ENCODE measurements at regions of chr14 and their contacts with region 1.

Region 1: DNA sequence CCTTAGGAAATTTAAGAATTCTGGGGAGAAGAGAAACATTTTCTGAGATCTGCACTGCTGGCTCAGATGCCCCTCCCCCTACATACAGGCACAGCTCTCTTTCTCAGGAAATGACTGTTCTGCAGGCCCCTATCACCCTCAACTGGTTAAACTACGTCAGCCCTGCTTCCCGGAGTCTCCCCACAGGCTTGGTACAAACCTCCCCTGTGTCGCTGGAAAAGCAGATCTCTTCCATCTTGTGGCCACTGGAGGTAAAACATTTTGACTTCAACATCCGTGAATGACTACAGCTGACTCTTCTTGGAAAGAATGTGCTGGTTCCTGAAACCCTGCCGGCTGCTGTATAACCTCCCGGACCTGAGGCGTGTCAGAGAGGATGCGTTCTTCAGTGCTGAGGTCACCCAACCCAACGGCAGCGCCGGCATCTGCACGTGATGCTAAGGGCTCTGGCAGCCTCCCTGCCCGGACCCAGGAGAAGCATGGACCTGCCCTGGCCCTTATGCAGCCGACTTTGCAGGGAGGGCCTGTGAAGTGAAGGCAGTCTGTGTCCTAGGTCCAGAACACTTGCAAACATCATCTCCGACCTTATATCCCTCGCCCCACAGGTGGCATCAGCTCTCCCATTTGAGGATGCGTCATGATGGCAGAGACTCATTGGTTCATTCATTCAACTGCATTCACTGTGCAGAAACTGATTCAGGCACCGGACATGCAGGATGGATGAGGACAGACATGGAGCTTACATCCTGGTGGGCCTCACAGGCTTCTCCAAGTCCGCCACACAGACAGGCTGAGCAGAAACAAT is 129.3 kb downstream of the GCH1 start:
- DNase-seq: peak; percentile 93
- ATAC-seq: peak; percentile 83
- H3K4me3 Mint-ChIP-seq: peak overlapping the region; percentile 16
- H3K27ac Mint-ChIP-seq: peak overlapping the region; percentile 79
- H3K4me1 Mint-ChIP-seq: peaks cover 47% of the 10 kb centered on the region
- H3K27me3 Mint-ChIP-seq: peaks cover 9% of the 10 kb centered on the region
- CTCF ChIP-seq: no peak

Region 2: GRCh38 chr14:54440873-54441868 is 332.2 kb before region 1 on chr14 and contains the start of gene CNIH1:
- CTCF ChIA-PET with region 1: interaction called, 3 read pairs
- POLR2A ChIA-PET with region 1: no interaction called
- intact Hi-C with region 1: loop called (anchors 10 kb)
- DNase-seq: peak; percentile 92
- ATAC-seq: peak; percentile 92
- H3K4me3 Mint-ChIP-seq: peak within 1 kb of the TSS; percentile 98
- H3K27ac Mint-ChIP-seq: peak within 1 kb of the TSS; percentile 97
- H3K4me1 Mint-ChIP-seq: peaks cover 50% of the 10 kb centered on the region
- H3K27me3 Mint-ChIP-seq: peaks cover 2% of the 10 kb centered on the region
- CTCF ChIP-seq: peak; percentile 99
- total RNA-seq, gene CNIH1: 82.0 to 82.7 TPM

Region 3: DNA sequence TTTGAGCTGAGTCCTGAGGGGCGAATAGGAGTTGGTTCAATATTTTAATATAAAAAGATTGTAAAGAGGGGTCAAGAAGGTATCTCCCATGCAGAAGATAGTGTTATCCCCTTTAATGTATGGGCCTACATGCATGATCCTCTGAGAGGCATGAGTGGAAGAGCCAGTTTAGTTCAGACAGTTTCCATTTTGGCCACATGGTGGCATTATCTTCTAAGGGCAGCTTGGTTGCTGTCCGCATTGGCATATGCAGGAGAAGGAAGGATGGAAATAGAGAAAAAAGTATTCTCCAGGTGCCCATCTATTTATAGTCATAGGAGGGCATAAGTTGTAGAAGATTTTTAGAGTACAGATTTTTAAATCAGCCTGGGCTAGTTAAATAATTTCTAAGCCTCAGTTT is 201.1 kb before region 1 on chr14:
- CTCF ChIA-PET with region 1: interaction called, 247 read pairs
- POLR2A ChIA-PET with region 1: interaction called, 21 read pairs
- intact Hi-C with region 1: no loop called
- DNase-seq: peak; percentile 57
- ATAC-seq: no peak
- H3K4me3 Mint-ChIP-seq: no peak overlapping the region
- H3K27ac Mint-ChIP-seq: no peak overlapping the region
- H3K4me1 Mint-ChIP-seq: peaks cover 11% of the 10 kb centered on the region
- H3K27me3 Mint-ChIP-seq: peaks cover 36% of the 10 kb centered on the region
- CTCF ChIP-seq: peak; percentile 72

Region 4: DNA sequence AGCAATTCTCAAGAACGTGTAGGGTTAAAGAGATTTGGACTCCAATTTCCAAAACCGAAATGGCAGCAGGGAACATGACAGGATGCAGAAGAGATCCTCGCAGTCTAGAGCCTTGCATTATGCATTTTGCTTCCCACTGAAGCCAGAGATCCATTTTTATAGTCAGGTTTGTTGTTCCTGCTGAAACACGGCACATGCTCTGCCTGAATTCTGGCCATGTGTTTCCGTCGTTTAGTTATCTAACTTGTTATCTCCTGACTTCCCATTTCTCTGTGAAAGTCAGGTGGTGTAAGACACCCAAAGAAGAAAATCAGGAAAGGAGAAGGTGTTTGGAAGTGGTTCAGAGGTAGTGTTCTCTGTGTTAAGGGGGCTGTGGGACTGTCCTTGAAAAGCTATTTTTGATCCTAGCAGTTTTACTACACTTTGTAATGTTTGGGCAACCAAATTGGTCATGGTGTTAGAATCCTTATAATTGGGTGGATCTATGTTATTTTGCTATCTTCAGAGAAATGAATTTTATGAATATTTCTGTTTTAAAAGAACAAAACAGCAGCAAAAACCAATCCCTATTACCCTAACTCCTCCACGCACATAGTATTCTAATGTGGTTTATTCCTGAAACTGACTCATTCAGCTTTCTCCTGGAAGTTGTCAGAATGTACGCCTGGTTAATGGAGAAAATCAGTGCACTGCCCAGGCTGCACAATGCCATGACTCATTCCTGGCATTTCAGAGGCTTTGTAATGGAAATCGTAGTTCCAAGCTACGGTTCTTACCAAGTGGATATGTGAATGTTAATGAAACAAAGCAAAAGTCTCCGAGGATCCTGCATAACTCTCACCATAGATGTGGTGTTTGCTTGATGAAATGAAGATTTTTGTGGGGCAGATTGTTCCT is 96.3 kb before region 1 on chr14:
- CTCF ChIA-PET with region 1: interaction called, 34 read pairs
- POLR2A ChIA-PET with region 1: interaction called, 3 read pairs
- intact Hi-C with region 1: loop called (anchors 10 kb)
- DNase-seq: no peak
- ATAC-seq: no peak
- H3K4me3 Mint-ChIP-seq: no peak overlapping the region
- H3K27ac Mint-ChIP-seq: no peak overlapping the region
- H3K4me1 Mint-ChIP-seq: peaks cover 3% of the 10 kb centered on the region
- H3K27me3 Mint-ChIP-seq: peaks cover 21% of the 10 kb centered on the region
- CTCF ChIP-seq: no peak

Region 5: DNA sequence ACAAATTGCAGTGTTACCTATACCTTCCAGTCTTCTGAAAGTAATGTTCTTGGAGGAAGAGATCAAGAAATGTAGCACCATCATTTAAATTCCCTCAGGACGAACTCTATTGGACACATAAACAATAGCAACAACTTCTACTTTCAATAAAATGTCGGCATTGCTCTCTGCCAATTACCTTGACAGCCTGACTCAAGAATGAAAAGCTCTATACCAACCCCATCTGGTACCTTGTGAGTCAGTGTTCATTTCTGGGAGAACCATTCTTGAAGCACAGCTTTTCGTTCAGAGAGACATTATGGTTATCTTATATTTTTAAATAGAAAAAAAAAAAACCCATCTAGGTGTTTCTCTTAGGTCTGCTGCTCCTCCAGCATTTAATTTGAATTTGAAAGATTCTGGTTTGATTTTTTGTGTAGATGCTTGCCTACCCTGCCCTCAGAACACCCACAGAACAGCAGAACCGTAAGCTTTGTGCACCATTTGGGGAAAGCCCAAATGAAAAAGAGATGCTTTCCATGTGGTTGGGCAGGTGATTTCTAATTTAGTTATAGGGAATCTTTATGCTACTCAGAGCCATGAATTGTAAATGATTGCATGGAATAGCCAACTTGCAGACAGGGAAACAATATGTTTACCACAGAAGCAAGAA is 50.5 kb before region 1 on chr14:
- CTCF ChIA-PET with region 1: interaction called, 63 read pairs
- POLR2A ChIA-PET with region 1: no interaction called
- intact Hi-C with region 1: no loop called
- DNase-seq: peak; percentile 26
- ATAC-seq: peak; percentile 77
- H3K4me3 Mint-ChIP-seq: no peak overlapping the region
- H3K27ac Mint-ChIP-seq: no peak overlapping the region
- H3K4me1 Mint-ChIP-seq: peaks cover 12% of the 10 kb centered on the region
- H3K27me3 Mint-ChIP-seq: peaks cover 19% of the 10 kb centered on the region
- CTCF ChIP-seq: peak; percentile 55

Region 6: GRCh38 chr14:54756656-54757392 is 16.5 kb before region 1 on chr14:
- CTCF ChIA-PET with region 1: interaction called, 10 read pairs
- POLR2A ChIA-PET with region 1: interaction called, 4 read pairs
- intact Hi-C with region 1: no loop called
- DNase-seq: no peak
- ATAC-seq: no peak
- H3K4me3 Mint-ChIP-seq: no peak overlapping the region
- H3K27ac Mint-ChIP-seq: no peak overlapping the region
- H3K4me1 Mint-ChIP-seq: peaks cover 12% of the 10 kb centered on the region
- H3K27me3 Mint-ChIP-seq: peaks cover 9% of the 10 kb centered on the region
- CTCF ChIP-seq: no peak

Region 7: GRCh38 chr14:55038708-55039107 is 265.3 kb after region 1 on chr14:
- CTCF ChIA-PET with region 1: no interaction called
- POLR2A ChIA-PET with region 1: no interaction called
- intact Hi-C with region 1: no loop called
- DNase-seq: no peak
- ATAC-seq: no peak
- H3K4me3 Mint-ChIP-seq: no peak overlapping the region
- H3K27ac Mint-ChIP-seq: no peak overlapping the region
- H3K4me1 Mint-ChIP-seq: no peaks in the 10 kb centered on the region
- H3K27me3 Mint-ChIP-seq: no peaks in the 10 kb centered on the region
- CTCF ChIP-seq: no peak

Region 8: DNA sequence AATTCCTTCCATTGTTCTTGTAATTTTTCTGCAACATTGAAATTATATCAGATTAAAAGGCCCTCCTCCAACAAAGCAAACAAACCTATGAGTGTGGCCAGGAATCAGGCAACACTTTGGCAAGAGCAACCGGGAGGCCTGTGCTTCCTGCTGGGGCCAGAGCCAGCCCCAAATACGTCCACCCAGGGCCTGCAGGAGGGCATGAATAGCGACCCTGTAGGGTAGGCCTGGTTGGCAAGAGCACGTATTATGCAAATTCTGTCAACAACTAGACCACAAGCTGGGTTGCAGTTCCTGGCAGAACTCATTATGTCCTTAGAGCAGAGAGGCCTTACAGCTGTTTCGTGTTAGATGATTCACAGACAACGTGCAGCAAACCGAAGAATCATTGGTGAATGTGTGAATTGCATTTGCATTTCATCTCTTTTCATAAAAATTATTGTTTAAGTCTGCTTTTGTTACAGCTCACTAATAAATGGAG is 328.8 kb after region 1 on chr14:
- CTCF ChIA-PET with region 1: no interaction called
- POLR2A ChIA-PET with region 1: no interaction called
- intact Hi-C with region 1: no loop called
- DNase-seq: peak; percentile 82
- ATAC-seq: peak; percentile 67
- H3K4me3 Mint-ChIP-seq: peak overlapping the region; percentile 67
- H3K27ac Mint-ChIP-seq: peak overlapping the region; percentile 99
- H3K4me1 Mint-ChIP-seq: peaks cover 52% of the 10 kb centered on the region
- H3K27me3 Mint-ChIP-seq: no peaks in the 10 kb centered on the region
- CTCF ChIP-seq: no peak

Region 9: DNA sequence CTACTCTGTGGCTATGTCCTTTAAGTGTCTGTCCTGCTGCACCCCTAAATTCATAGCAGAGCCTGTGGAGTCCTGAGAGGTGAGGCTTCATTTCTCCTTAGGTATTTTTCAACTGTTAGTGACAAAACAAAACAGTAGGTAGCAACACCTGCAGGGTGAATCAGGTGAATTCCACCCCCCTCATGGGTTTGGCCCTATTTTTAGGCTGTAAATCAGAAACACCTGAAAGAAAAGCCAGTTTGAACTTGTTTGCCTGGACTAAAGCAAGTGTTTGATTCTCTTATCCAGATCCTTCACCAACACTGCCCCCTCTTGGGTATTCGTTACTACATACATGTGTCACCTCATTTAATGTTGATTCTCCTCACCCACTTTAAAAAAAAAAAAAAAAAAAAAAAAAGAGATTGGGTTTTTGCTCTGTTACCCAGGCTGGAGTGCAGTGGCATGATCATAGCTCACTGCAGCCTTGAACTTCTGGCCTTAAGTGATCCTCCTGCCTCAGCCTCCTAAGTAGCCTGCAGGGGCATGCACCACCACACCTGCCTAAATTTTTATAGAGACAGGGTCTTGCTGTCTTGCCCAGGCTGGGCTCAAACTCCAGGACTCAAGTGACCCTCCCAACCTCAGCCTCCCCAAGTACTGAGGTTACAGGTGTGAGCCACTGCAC is 656.8 kb after region 1 on chr14:
- CTCF ChIA-PET with region 1: no interaction called
- POLR2A ChIA-PET with region 1: no interaction called
- intact Hi-C with region 1: no loop called
- DNase-seq: peak; percentile 65
- ATAC-seq: peak; percentile 92
- H3K4me3 Mint-ChIP-seq: no peak overlapping the region
- H3K27ac Mint-ChIP-seq: peak overlapping the region; percentile 51
- H3K4me1 Mint-ChIP-seq: peaks cover 23% of the 10 kb centered on the region
- H3K27me3 Mint-ChIP-seq: no peaks in the 10 kb centered on the region
- CTCF ChIP-seq: peak; percentile 76

Measured in activated CD8-positive, alpha-beta T cell treated with anti-CD3 and anti-CD28 coated beads for 36 hours (primary cell).